Activated naive CD4-positive, alpha-beta T cell treated with anti-CD3 and anti-CD28 coated beads for 36 hours (primary cell): ENCODE measurements at regions of chr5 and their contacts with region 1.

Region 1: DNA sequence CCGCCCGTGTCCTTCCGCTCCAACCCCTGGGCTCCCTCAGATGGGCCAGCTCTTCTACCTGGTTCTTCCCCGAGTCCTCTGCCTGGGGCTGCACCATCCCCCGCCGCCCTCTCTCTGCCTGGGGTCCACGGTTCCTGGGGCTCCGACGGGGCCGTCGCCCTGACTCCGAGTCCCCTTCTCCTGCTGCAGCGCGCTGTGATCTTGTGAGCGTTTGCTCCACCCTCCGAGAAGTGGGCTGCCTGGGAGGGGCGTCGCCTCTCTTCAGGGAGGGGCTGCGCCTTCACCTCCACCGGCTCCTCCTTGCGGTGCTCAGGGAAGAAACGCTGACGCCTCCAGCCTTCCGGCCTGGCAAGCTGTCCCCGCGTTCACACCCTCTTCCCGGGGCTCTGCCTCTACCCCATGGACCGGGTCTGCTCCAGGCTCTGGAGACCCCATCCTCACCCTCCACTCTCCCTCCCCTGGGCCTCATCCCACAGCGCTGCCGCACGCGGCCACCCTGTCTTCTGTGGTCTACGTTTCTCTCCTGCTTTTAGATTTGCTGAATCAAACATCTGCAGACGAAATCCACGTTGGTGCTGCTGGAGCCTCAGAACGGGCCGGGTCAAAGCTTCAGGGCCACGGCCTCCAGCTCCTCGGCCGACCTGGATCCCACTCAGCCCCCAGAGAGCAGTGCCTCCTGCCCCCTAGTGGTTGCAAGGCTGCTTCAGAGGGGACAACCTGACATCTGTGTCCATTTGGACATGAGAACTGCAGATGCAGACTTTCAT is 22.7 kb upstream of the SLC6A3 start:
- DNase-seq: peak; percentile 47
- H3K4me3 Mint-ChIP-seq: no peak overlapping the region
- H3K27ac Mint-ChIP-seq: no peak overlapping the region
- H3K4me1 Mint-ChIP-seq: peaks cover 6% of the 10 kb centered on the region
- H3K27me3 Mint-ChIP-seq: no peaks in the 10 kb centered on the region

Region 2: DNA sequence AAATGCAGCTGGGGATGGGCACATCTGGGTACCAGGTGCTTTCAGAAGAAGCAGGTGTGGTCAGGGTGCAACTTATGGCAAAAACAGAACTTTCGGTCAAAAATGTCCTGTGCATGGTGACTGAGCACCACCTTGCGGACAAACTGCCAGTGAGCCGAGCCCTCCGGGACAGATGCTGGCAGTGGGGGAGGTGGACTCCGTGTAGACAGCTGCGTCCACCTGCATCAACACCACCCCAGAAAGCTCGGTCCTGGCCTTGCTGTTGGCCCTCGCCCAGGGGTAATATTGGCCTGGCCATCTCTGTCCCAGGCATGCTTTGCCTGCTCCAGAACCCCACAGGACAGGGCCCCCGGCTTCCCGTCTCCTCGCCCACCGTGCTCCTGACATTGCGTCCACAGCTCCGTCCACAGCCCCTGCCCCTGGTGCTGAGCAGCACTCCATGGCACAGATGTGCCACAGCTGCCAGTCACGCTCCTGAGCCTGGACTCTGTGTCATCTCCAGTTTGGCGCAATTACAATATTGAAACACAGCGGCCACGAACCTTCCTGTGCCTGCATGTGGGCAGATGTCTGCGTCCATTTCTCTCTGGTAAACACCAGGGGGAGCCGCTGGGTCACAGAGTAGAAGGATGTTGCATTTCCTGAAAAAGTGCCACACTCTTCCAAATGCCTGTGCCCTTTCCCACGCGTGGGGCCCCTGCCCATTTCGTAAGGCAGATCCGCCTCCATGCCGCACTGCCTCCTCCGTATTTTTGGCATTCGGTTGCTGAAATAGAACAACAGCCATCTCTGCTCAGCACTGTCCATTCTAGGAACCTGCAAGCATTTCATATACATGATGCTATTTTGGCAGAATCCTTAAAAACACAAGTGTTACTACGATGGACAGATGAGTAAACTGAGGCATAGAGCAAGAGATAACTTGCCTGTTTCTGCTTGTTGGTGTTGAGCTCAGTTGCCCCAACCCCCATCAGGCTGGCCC is 299.9 kb before region 1 on chr5:
- CTCF ChIA-PET with region 1: no interaction called
- intact Hi-C with region 1: loop called (anchors 5 kb)
- DNase-seq: peak; percentile 75
- H3K4me3 Mint-ChIP-seq: peak overlapping the region; percentile 37
- H3K27ac Mint-ChIP-seq: no peak overlapping the region
- H3K4me1 Mint-ChIP-seq: peaks cover 4% of the 10 kb centered on the region
- H3K27me3 Mint-ChIP-seq: peaks cover 8% of the 10 kb centered on the region

Region 3: GRCh38 chr5:1385395-1386273 is 82.3 kb before region 1 on chr5:
- CTCF ChIA-PET with region 1: no interaction called
- intact Hi-C with region 1: loop called (anchors 1 kb)
- DNase-seq: peak; percentile 85
- H3K4me3 Mint-ChIP-seq: peak overlapping the region; percentile 90
- H3K27ac Mint-ChIP-seq: peak overlapping the region; percentile 89
- H3K4me1 Mint-ChIP-seq: peaks cover 15% of the 10 kb centered on the region
- H3K27me3 Mint-ChIP-seq: no peaks in the 10 kb centered on the region

Region 4: DNA sequence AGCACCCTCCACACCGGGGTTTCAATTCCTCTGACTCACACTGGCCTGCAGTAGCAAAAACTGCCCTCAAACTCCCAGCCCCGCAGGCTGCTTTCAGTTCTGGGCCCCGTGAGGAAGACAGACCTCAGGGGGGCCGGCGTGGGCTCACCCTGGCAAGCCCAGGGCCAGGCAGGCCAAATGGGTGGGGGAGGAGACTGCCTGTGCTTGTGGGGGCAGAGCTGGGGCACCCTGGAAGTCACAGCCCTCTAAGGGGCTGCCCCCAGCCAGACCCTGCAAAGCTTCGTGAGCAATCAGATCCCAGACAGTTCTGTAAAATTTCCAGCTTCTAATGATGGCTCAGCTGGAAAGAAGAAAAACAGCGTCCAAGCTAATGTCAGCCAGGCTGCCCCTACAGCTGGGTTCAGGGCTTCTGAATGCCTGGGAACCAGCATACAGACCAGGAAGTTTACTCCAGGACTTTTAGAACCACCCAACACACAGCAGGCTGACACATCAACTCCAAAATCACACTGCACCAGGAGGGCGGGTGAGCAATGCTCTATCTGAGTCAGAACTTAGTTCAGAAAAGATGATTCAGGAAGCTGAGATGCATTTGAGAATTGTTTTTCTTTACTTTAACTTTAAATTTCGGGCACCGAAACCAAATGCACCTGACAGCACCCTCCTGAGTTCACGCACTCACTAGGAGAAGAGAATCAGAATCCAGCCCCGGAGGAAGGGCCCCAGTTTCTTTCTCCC is 21.2 kb after region 1 on chr5:
- CTCF ChIA-PET with region 1: no interaction called
- intact Hi-C with region 1: loop called (anchors 1 kb)
- DNase-seq: peak; percentile 67
- H3K4me3 Mint-ChIP-seq: no peak overlapping the region
- H3K27ac Mint-ChIP-seq: peak overlapping the region; percentile 65
- H3K4me1 Mint-ChIP-seq: peaks cover 21% of the 10 kb centered on the region
- H3K27me3 Mint-ChIP-seq: no peaks in the 10 kb centered on the region